Gastrocnemius medialis (tissue), 4 donors: ENCODE measurements at regions of chr12 and their contacts with region 1.

Region 1: DNA sequence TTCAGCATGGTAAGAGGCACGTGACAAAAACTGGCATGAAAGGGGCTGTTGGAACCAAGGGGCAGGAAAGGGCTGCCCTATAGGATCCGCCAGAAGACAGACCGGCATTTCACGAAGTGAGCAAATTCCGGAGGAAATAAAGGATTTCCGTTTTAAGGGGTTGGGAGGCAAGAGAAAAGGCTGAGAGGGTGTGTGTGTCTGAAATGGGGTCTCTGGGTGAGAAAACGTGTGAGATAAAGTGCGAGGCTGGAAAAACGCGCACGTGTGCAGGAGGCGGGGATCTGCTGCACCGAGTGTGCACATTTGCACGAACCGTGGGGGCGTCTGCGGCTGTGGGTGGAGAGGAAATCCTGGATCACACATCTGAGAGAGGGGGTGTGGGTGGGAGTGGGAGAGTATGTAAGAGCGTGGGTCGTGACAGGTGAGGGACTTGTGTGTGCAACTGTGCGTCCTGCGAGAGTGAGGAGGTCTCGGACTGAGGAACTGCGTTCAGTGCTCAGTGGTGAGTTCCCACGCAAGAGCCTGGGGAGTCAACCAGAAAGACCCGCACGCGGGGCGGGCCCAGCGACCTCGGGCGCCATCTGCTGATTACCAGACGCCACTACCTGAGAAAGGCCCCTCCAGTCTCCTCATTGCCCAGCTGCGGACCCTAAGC is 37.0 kb upstream of the P2RX7 start:
- DNase-seq: peak; percentile 19 to 25
- ATAC-seq: peak; percentile 47 to 80
- H3K4me3 ChIP-seq: peak overlapping the region; percentile 1 to 47 (median 34)
- H3K27ac ChIP-seq: no peak overlapping the region
- H3K4me1 ChIP-seq: peaks cover 5 to 9% of the 10 kb centered on the region in 2 donors
- H3K27me3 ChIP-seq: peaks cover 0 to 10% (median 6%) of the 10 kb centered on the region in 3 donors
- CTCF ChIP-seq: peak; percentile 31 to 83 (median 65)
- POLR2A ChIP-seq: no peak

Region 2: DNA sequence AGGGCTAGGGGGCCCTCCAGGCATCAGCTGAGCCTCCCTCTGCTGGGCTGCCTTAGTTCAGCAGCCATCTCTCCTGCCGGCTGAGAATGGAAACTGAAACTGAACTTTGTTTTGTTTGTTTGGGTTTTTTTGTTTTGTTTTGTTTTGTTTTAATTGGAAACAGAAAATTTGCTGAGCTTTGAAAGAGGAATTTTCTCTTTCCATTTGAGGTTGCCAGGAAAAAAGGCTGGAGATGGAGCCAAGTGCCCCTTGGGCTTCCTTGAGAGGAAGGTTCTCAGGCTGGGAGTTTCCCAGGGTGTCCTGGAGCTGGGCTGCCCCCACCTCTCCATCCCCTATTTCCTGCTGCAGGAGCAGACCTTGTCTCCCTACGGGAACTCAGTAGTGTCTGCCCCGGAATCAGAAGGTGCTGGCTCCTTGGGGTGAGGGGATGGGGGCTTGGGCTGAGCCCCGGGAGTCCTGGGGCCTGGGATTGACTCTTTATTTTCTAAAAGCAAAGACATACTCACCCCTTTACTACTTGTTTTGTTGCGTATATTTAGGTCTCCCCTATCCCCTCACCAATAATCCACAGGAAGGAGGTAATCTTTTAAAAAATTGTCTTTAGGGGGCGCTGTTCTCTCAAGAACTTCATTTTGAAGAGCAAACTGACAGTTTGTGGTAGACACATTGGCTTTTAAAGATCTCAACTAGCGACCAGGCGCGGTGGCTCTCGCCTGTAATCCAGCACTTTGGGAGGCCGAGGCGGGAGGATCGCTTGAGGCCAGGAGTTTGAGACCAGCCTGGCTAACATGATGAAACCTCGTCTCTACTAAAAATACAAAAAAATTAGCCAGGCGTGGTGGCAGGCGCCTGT is 35.3 kb before region 1 on chr12:
- in situ Hi-C with region 1: no loop called
- intact Hi-C with region 1: loop called (anchors 5 kb)
- DNase-seq: no peak
- ATAC-seq: no peak
- H3K4me3 ChIP-seq: peak overlapping the region; percentile 10 to 40 (median 18)
- H3K27ac ChIP-seq: peak overlapping the region; percentile 4 to 50 (median 40)
- H3K4me1 ChIP-seq: no peaks in the 10 kb centered on the region
- H3K27me3 ChIP-seq: no peaks in the 10 kb centered on the region
- CTCF ChIP-seq: peak in 3 of 5 experiments; percentile 18 to 43 (median 20)
- POLR2A ChIP-seq: no peak

Region 3: GRCh38 chr12:121175383-121176227 is 79.9 kb after region 1 on chr12:
- in situ Hi-C with region 1: no loop called
- intact Hi-C with region 1: no loop called
- DNase-seq: peak; percentile 8 to 20
- ATAC-seq: no peak
- H3K4me3 ChIP-seq: no peak overlapping the region
- H3K27ac ChIP-seq: no peak overlapping the region
- H3K4me1 ChIP-seq: no peaks in the 10 kb centered on the region
- H3K27me3 ChIP-seq: no peaks in the 10 kb centered on the region
- CTCF ChIP-seq: no peak
- POLR2A ChIP-seq: no peak